CD4-positive, alpha-beta T cell (primary cell): ENCODE measurements at regions of chr1 and their contacts with region 1.

Region 1: DNA sequence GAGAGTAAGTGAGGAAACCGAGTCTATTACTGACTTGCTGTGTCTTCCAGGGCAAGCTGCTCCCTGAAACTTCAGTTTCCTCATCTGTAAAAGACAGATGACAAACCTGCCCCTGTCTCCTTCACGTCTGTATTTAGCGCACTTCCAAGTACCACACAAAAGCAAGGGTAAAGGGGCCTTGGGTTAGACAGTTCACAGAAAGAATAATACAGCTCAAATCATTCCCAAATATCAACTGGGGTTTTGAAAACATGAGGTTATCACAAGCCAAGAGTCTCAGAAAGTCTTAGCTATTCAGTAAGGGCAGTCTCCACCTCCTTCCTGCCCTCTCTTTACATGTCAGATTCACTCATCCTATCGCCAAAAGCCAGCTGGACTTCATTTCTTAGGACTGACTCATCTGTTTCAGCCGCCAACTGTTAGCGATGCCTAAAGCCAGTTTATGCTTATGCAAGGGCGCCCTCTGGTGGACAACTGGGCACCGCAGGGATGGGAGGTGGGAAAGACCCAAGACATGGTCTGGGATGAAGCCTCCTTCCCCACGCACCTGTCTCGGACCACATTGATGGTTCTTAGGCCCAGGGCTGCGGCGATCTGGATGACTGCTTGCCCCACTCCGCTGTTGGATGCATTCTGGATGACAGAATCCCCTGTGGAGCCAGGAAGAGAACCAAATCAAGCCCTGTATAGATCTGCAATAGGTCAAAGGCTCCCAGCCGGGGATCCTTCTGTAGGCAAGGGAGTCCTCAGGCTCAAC is 21.1 kb upstream of the SRSF4 start:
- DNase-seq: peak; percentile 79 to 94 (median 88)
- ATAC-seq: peak; percentile 93
- H3K4me3 ChIP-seq: no peak overlapping the region
- H3K4me3 Mint-ChIP-seq: no peak overlapping the region
- H3K27ac ChIP-seq: no peak overlapping the region
- H3K27ac Mint-ChIP-seq: no peak overlapping the region
- H3K4me1 ChIP-seq: peaks cover 3% of the 10 kb centered on the region
- H3K4me1 Mint-ChIP-seq: no peaks in the 10 kb centered on the region
- H3K27me3 ChIP-seq: no peaks in the 10 kb centered on the region
- H3K27me3 Mint-ChIP-seq: no peaks in the 10 kb centered on the region
- CTCF ChIP-seq: peak; percentile 88

Region 2: GRCh38 chr1:28792644-28793121 is 410.1 kb before region 1 on chr1:
- CTCF ChIA-PET with region 1: no interaction called
- POLR2A ChIA-PET with region 1: no interaction called
- intact Hi-C with region 1: loop called in 1 of 2 experiments (anchors 2 kb)
- DNase-seq: no peak
- ATAC-seq: no peak
- H3K4me3 ChIP-seq: no peak overlapping the region
- H3K4me3 Mint-ChIP-seq: no peak overlapping the region
- H3K27ac ChIP-seq: no peak overlapping the region
- H3K27ac Mint-ChIP-seq: no peak overlapping the region
- H3K4me1 ChIP-seq: no peaks in the 10 kb centered on the region
- H3K4me1 Mint-ChIP-seq: peaks cover 7% of the 10 kb centered on the region
- H3K27me3 ChIP-seq: no peaks in the 10 kb centered on the region
- H3K27me3 Mint-ChIP-seq: peaks cover 11% of the 10 kb centered on the region
- CTCF ChIP-seq: no peak

Region 3: DNA sequence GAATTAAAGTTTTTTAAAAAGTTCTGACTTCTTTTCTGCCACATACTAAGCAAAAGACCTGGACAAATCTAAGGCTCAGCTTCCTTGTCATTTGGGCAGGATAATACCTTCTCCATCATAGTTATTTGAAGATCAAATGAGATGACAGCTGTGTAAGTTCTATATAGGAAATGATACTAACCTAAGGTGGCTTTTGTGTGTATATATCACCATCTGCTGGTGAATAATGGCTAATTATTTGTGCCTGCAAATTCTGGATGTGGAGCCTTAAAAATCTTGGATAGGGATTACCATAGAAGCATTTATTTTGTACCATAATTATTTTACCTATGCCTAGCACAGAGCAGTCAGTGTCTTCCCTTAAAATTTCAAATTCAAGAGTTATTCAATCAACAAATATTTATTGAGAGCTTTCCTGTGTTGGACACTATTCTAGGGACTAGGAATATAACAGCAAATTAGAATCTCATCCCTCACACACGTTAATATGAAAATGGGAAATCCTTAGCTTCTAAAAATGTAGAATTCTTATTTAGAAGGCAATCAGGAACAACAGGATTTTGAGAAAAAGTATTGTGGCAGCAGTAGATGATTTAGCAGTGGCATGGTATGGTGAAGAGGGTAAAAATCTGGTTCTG is 168.8 kb before region 1 on chr1:
- CTCF ChIA-PET with region 1: no interaction called
- POLR2A ChIA-PET with region 1: no interaction called
- intact Hi-C with region 1: loop called in 1 of 2 experiments (anchors 5 kb)
- DNase-seq: peak in 3 of 14 experiments; percentile 56 to 62 (median 60)
- ATAC-seq: peak; percentile 57
- H3K4me3 ChIP-seq: no peak overlapping the region
- H3K4me3 Mint-ChIP-seq: no peak overlapping the region
- H3K27ac ChIP-seq: no peak overlapping the region
- H3K27ac Mint-ChIP-seq: no peak overlapping the region
- H3K4me1 ChIP-seq: no peaks in the 10 kb centered on the region
- H3K4me1 Mint-ChIP-seq: peaks cover 8% of the 10 kb centered on the region
- H3K27me3 ChIP-seq: no peaks in the 10 kb centered on the region
- H3K27me3 Mint-ChIP-seq: no peaks in the 10 kb centered on the region
- CTCF ChIP-seq: peak; percentile 78

Region 4: GRCh38 chr1:29124366-29125236 is 78.2 kb before region 1 on chr1:
- CTCF ChIA-PET with region 1: no interaction called
- POLR2A ChIA-PET with region 1: no interaction called
- intact Hi-C with region 1: loop called (anchors 2 to 10 kb)
- DNase-seq: peak; percentile 20 to 69 (median 42)
- ATAC-seq: peak; percentile 55
- H3K4me3 ChIP-seq: peak overlapping the region; percentile 61
- H3K4me3 Mint-ChIP-seq: peak overlapping the region; percentile 48
- H3K27ac ChIP-seq: no peak overlapping the region
- H3K27ac Mint-ChIP-seq: no peak overlapping the region
- H3K4me1 ChIP-seq: peaks cover 41% of the 10 kb centered on the region
- H3K4me1 Mint-ChIP-seq: peaks cover 8% of the 10 kb centered on the region
- H3K27me3 ChIP-seq: peaks cover 25 to 44% of the 10 kb centered on the region in 2 experiments
- H3K27me3 Mint-ChIP-seq: peaks cover 26% of the 10 kb centered on the region
- CTCF ChIP-seq: no peak